ENCODE measurements at regions of chr7 and their contacts with region 1.

Region 1: GRCh38 chr7:116258734-116259133 is 48.4 kb downstream of the TES start:
- DNase-seq: peak; percentile 52 to 58
- H3K4me3 ChIP-seq: no peak overlapping the region
- H3K27ac ChIP-seq: peak overlapping the region; percentile 30; the same call in 1 of the 2 replicates
- H3K4me1 ChIP-seq: peaks cover 18% of the 10 kb centered on the region
- H3K27me3 ChIP-seq: no peaks in the 10 kb centered on the region
- CTCF ChIP-seq: peak; percentile 93

Region 2: DNA sequence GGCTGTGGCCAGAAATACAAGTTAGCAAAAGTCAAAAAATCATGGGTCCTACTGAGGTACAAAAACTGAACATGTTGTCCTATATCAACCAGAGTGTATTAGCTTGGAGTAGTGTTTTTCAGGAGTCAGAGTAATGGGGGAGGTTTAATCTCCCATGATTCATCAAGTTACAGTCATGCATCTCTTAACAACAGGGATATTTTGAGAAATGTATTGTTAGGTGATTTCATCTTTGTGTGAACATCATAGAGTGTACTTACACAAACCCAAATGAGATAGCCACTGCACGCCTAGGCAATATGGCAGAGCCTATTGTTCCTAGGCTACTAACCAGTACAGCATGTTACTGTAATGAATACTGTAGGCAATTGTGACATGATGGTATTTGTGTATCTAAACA is 63.3 kb before region 1 on chr7:
- CTCF ChIA-PET with region 1: no interaction called
- POLR2A ChIA-PET with region 1: no interaction called
- intact Hi-C with region 1: no loop called
- DNase-seq: no peak
- H3K4me3 ChIP-seq: no peak overlapping the region
- H3K27ac ChIP-seq: no peak overlapping the region
- H3K4me1 ChIP-seq: no peaks in the 10 kb centered on the region
- H3K27me3 ChIP-seq: no peaks in the 10 kb centered on the region
- CTCF ChIP-seq: no peak

Region 3: GRCh38 chr7:116290740-116291139 is 32.0 kb after region 1 on chr7:
- CTCF ChIA-PET with region 1: interaction called, 3 read pairs
- POLR2A ChIA-PET with region 1: interaction called, 25 read pairs
- intact Hi-C with region 1: no loop called
- DNase-seq: no peak
- H3K4me3 ChIP-seq: no peak overlapping the region
- H3K27ac ChIP-seq: no peak overlapping the region
- H3K4me1 ChIP-seq: no peaks in the 10 kb centered on the region
- H3K27me3 ChIP-seq: no peaks in the 10 kb centered on the region
- CTCF ChIP-seq: no peak

Region 4: DNA sequence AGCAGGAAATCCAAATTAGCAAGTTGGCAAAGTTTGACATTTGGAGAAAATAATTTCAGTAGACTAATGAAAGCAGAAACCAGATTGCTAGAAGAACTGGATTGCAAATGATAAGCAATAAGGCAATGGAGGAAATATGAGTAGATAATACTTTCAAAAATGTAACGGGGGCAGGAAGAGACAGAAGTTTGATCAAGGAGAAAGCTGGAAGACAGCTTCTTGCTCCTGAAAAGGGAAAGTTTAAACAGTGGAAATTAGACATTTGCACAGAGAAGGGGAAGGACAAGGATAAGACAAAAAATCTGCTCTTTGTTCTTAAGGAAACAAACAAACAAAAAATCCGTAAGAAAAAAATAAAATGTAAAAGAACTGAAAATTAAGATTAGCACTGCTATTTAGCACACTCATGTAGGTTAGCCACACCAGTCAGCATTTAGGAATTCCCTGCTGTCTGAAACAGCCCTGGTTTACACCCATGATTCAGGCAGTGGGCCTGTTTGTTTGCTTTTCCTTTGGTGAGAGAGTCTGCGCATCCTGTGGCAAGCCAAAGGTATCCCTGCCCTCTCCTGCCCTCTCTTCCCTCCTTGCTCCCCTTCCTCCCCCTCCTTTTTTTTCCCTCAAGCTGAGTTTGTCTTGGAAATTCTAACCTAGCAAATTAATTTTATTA is 136.5 kb after region 1 on chr7:
- CTCF ChIA-PET with region 1: interaction called, 3 read pairs
- POLR2A ChIA-PET with region 1: interaction called, 7 read pairs
- intact Hi-C with region 1: loop called (anchors 1 kb)
- DNase-seq: peak; percentile 85 to 90
- H3K4me3 ChIP-seq: peak overlapping the region; percentile 37; the same call in 1 of the 2 replicates
- H3K27ac ChIP-seq: peak overlapping the region; percentile 96
- H3K4me1 ChIP-seq: peaks cover 29% of the 10 kb centered on the region
- H3K27me3 ChIP-seq: no peaks in the 10 kb centered on the region
- CTCF ChIP-seq: no peak

Region 5: GRCh38 chr7:116443101-116443523 is 184.4 kb after region 1 on chr7:
- CTCF ChIA-PET with region 1: no interaction called
- POLR2A ChIA-PET with region 1: interaction called, 4 read pairs
- intact Hi-C with region 1: loop called (anchors 1 kb)
- DNase-seq: peak; percentile 46 to 95
- H3K4me3 ChIP-seq: peak overlapping the region; percentile 65; the same call in 1 of the 2 replicates
- H3K27ac ChIP-seq: peak overlapping the region; percentile 100
- H3K4me1 ChIP-seq: peaks cover 58% of the 10 kb centered on the region
- H3K27me3 ChIP-seq: no peaks in the 10 kb centered on the region
- CTCF ChIP-seq: no peak

Region 6: GRCh38 chr7:116499168-116500077 is 240.7 kb after region 1 on chr7 and contains the start of gene CAV2:
- CTCF ChIA-PET with region 1: interaction called, 3 read pairs
- POLR2A ChIA-PET with region 1: interaction called, 5 read pairs
- intact Hi-C with region 1: loop called (anchors 1 kb)
- DNase-seq: peak; percentile 88 to 95
- H3K4me3 ChIP-seq: peak within 1 kb of the TSS; percentile 89
- H3K27ac ChIP-seq: peak within 1 kb of the TSS; percentile 81
- H3K4me1 ChIP-seq: peaks cover 35% of the 10 kb centered on the region
- H3K27me3 ChIP-seq: no peaks in the 10 kb centered on the region
- CTCF ChIP-seq: no peak
- total RNA-seq, gene CAV2: 260 and 296 TPM in 2 replicates

Region 7: DNA sequence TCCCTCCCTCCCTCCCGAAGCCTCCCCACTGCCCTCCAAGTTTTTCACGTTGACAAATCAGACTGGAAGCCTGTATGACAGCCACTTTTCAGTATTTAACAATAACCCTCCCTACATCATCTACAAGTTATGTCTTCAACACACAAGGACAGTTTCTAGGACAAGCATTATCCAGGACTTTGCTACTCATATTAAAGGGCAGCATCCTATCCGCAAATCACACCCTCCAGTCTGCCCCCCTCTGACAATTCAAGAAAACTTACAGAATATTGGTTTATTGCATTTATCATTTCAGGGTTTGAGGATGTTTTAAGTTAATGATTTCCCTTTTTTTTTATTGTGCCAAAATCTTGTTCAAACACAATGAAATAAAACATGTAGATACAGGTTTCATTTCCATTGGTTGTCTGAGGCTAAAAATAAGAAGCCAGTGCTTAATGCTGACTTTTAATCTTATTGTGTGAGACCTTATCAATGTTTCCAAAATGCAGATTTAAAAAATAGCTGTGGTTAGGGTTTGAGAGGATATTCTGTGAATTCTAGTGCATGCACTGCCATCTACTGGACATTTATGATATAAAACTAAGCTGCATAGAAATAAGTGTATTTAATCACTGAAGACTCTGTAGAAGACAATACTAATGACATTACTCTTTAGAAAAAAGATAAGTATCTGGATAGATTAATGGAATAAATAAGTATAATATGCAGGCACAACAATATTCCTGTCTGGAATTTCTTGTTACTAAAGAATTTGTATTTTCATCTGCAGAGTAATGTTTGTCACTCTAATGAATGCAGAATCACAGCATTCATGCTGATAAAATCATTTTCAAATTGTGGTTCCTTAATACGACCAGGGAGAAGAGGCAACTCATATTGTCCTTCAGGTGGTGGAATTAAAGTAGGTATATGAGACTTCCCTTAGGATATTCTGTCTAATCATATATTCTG is 330.2 kb after region 1 on chr7:
- CTCF ChIA-PET with region 1: interaction called, 27 read pairs
- POLR2A ChIA-PET with region 1: interaction called, 4 read pairs
- intact Hi-C with region 1: loop called (anchors 1 kb)
- DNase-seq: peak in 1 of 2 experiments; percentile 6
- H3K4me3 ChIP-seq: no peak overlapping the region
- H3K27ac ChIP-seq: no peak overlapping the region
- H3K4me1 ChIP-seq: peaks cover 14% of the 10 kb centered on the region
- H3K27me3 ChIP-seq: no peaks in the 10 kb centered on the region
- CTCF ChIP-seq: peak; percentile 94

Region 8: DNA sequence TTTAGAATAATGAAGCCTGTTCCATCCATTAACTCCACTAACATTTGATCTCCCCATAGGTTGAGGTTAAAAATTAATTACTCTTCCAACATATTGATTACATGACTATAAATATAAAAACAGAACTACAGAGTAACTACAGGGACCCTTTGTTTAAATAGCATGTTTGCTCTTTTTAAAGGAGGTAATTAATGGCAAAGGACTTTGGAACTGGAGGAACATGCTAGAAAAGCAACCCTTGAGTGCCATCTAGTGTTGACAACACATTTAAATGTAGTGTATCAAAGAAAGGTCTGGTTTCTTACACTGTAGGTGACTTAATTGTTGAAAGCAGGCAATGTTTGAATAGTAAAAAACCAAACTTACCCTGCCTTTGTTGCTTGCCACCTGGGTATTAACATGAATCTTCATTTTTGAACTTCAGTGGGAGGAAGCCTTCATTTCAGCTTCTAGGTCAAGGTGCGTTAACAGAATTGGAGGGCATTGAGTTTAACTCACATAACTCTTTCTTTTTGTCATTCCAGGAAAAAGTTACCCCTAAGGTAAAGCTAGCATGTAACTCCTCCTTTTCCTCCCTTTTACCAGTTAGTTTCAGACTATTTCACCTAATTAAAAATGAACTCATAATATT is 551.0 kb after region 1 on chr7:
- CTCF ChIA-PET with region 1: no interaction called
- POLR2A ChIA-PET with region 1: no interaction called
- intact Hi-C with region 1: loop called (anchors 1 kb)
- DNase-seq: peak; percentile 31 to 71
- H3K4me3 ChIP-seq: peak overlapping the region; percentile 25; the same call in 1 of the 2 replicates
- H3K27ac ChIP-seq: peak overlapping the region; percentile 81
- H3K4me1 ChIP-seq: peaks cover 44% of the 10 kb centered on the region
- H3K27me3 ChIP-seq: no peaks in the 10 kb centered on the region
- CTCF ChIP-seq: peak; percentile 87

Region 9: DNA sequence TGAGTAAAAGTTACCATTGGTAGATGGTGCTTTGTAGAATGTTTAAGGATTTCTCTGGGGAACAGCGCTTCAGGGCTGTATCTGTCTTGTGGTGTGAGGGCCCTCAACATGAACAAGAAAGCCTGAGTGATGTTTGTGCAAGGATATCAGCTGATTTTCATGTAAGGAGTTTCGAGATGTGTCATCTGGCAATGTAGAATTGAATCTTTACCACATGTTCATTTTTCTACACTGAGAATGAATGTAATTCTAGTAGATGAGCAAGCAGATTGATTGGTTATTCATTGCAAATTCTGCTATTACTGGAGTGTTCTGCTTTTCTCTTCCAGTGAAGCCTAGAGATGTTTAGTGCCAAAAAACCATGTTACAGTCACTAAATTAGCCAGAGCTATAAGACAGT is 782.3 kb after region 1 on chr7:
- CTCF ChIA-PET with region 1: no interaction called
- POLR2A ChIA-PET with region 1: no interaction called
- intact Hi-C with region 1: no loop called
- DNase-seq: no peak
- H3K4me3 ChIP-seq: no peak overlapping the region
- H3K27ac ChIP-seq: no peak overlapping the region
- H3K4me1 ChIP-seq: no peaks in the 10 kb centered on the region
- H3K27me3 ChIP-seq: no peaks in the 10 kb centered on the region
- CTCF ChIP-seq: no peak

Measured in PC-9 (cell line).